Naive thymus-derived CD4-positive, alpha-beta T cell (primary cell): ENCODE measurements at regions of chr1 and their contacts with region 1.

Region 1: GRCh38 chr1:224411766-224412165 is 22.8 kb downstream of the WDR26 start:
- DNase-seq: no peak
- ATAC-seq: peak; percentile 37
- H3K4me3 ChIP-seq: no peak overlapping the region
- H3K4me3 Mint-ChIP-seq: no peak overlapping the region
- H3K27ac ChIP-seq: no peak overlapping the region
- H3K27ac Mint-ChIP-seq: peak overlapping the region in 7 of 9 donors; percentile 15 to 72 (median 38)
- H3K4me1 ChIP-seq: no peaks in the 10 kb centered on the region
- H3K4me1 Mint-ChIP-seq: peaks cover 7 to 35% (median 15%) of the 10 kb centered on the region in 7 donors
- H3K27me3 ChIP-seq: no peaks in the 10 kb centered on the region
- H3K27me3 Mint-ChIP-seq: no peaks in the 10 kb centered on the region

Region 2: DNA sequence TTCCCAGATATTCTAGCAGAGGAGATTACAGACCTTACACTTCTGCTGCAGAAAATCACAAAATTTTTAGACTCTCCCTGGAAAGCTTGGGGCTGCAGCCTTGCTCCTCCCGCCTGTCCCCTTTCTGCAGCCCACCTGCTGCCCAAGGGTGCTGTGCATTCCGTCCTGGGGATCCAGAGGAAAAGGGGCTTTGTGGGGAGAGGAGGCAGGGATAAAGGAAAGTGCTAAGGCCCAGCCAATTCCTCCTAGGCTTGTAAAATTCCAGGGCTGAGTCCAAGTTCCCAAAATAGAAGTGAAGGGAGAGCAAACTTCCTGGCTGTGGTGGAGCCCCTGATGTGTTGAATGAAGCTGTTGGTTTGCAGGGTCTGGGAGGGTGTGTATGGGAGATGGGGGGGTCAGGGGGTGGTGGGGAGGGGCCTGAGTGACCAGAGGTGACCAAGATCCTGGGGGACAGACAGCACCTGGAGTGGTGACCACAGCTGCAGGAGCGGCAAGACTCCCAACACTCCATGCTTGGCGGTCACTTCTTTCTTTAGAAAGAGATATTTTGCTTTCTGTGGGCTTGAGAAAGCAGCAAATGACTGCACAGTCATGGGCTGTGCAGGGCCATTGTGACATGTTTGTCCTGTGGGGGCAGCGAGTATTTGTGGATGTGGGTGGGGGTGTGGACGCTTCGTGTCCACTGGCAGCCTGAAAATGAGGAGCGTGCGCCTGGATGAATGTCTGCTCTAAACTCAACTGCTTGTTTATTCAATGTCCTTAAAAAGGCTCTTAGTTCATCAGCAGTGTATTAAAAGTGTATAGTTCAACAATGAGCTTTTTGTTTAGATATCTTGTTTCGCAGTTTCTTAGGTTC is 1337.1 kb before region 1 on chr1:
- CTCF ChIA-PET with region 1: no interaction called
- POLR2A ChIA-PET with region 1: no interaction called
- intact Hi-C with region 1: no loop called
- DNase-seq: no peak
- ATAC-seq: no peak
- H3K4me3 ChIP-seq: no peak overlapping the region
- H3K4me3 Mint-ChIP-seq: no peak overlapping the region
- H3K27ac ChIP-seq: no peak overlapping the region
- H3K27ac Mint-ChIP-seq: no peak overlapping the region
- H3K4me1 ChIP-seq: no peaks in the 10 kb centered on the region
- H3K4me1 Mint-ChIP-seq: no peaks in the 10 kb centered on the region
- H3K27me3 ChIP-seq: no peaks in the 10 kb centered on the region
- H3K27me3 Mint-ChIP-seq: peaks cover 2 to 12% (median 7%) of the 10 kb centered on the region in 5 donors

Region 3: GRCh38 chr1:224383218-224383617 is 28.5 kb before region 1 on chr1:
- CTCF ChIA-PET with region 1: no interaction called
- POLR2A ChIA-PET with region 1: no interaction called
- intact Hi-C with region 1: no loop called
- DNase-seq: no peak
- ATAC-seq: no peak
- H3K4me3 ChIP-seq: no peak overlapping the region
- H3K4me3 Mint-ChIP-seq: peak overlapping the region in 4 of 10 donors; percentile 2 to 40 (median 11)
- H3K27ac ChIP-seq: no peak overlapping the region
- H3K27ac Mint-ChIP-seq: peak overlapping the region in 7 of 9 donors; percentile 20 to 79 (median 43)
- H3K4me1 ChIP-seq: peaks cover 53 to 61% of the 10 kb centered on the region in 2 donors
- H3K4me1 Mint-ChIP-seq: peaks cover 53 to 92% (median 82%) of the 10 kb centered on the region in 7 donors
- H3K27me3 ChIP-seq: no peaks in the 10 kb centered on the region
- H3K27me3 Mint-ChIP-seq: no peaks in the 10 kb centered on the region

Region 4: DNA sequence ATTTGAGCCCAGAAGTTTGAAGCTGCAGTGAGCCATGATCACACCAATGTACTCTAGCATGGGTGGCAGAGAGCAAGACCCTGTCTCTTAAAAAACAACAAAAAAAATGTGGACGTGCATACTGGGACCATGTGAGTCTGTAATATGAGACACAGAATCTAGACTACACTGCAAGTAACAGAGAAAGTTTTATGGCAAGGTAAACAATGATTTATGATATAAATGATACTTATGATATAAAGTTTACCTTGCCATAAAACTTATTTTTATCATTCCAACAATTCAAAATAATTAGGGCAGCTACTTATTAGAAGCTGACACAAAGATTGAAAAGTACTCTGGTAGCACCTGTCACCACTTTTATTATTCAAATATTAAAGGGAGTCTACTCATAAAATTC is 11.9 kb before region 1 on chr1:
- CTCF ChIA-PET with region 1: no interaction called
- POLR2A ChIA-PET with region 1: interaction called, 3 read pairs
- intact Hi-C with region 1: loop called in 1 of 2 experiments (anchors 2 kb)
- DNase-seq: no peak
- ATAC-seq: no peak
- H3K4me3 ChIP-seq: no peak overlapping the region
- H3K4me3 Mint-ChIP-seq: no peak overlapping the region
- H3K27ac ChIP-seq: no peak overlapping the region
- H3K27ac Mint-ChIP-seq: peak overlapping the region in 4 of 9 donors; percentile 15 to 65 (median 52)
- H3K4me1 ChIP-seq: peaks cover 0 to 5% of the 10 kb centered on the region in 2 donors
- H3K4me1 Mint-ChIP-seq: peaks cover 4 to 41% (median 17%) of the 10 kb centered on the region in 7 donors
- H3K27me3 ChIP-seq: no peaks in the 10 kb centered on the region
- H3K27me3 Mint-ChIP-seq: no peaks in the 10 kb centered on the region